ENCODE measurements at regions of chr11 and their contacts with region 1.

Region 1: DNA sequence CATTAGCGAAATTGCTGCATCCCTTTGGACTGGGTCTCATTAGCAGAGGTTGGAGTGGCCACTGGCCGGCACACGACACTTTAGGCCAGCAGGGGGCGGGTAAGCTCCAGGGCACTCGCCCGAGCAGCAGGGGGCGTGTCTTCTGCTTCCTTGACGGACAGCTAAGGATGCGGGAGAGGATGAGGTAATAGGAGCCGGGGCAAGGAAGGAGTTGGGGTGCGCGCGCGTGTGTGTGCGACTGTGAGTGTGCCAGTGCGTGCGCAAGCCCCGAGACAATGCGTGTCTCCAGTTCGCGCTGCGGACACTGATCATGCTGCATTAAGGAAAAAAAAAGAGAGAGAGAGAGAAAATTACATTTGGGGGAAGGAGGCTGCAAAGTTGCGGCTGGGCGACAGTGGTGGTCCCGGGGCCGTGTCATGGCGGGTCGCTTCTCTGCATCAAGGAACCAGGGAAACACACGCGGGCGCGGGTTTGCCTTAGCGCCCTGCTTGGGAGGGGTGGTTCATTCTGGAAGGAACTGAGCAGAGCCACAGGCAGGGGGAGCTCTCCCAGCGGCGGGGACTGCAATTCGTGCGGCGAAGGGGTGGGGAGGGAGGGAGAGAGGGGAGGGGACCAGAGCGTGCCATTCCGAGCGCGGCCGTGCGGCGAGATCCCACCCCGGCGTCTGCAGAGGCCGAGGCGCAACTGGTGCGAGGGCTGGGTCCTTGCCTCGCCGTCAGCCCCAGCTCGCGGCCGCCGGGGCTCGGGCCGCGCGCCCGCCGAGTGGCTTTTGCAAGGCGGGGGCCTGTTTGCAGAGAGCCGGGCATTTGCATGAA is at the start of gene DTX4:
- DNase-seq: peak; percentile 92 to 99
- ATAC-seq: peak; percentile 63
- total RNA-seq, gene DTX4: 58.4 to 62.4 TPM

Region 2: DNA sequence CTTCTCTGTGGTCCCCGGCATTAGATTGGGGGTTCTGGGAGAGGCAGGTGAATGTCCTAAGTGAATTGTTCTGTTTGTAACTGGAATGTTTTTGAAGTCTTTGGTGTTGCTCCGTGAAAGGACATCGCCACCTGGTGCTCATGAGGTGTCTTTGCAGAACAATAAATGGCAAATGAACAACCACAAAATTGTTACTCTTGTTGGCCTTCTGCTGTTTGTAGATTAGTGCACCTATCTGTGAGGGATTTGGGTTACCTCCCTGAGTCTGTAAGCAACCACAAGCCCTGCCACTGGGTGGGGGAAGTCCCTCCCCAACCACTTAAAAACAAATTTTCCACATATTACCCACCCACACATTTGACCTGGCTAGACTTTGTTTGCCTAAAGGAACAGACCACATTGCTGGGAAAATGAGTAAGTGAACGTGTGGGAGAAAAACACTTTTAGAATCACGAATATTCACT is 36.3 kb after region 1 on chr11:
- intact Hi-C with region 1: loop called in 1 of 2 experiments (anchors 5 kb)
- DNase-seq: peak in 1 of 2 donors; percentile 40
- ATAC-seq: peak; percentile 67

Region 3: DNA sequence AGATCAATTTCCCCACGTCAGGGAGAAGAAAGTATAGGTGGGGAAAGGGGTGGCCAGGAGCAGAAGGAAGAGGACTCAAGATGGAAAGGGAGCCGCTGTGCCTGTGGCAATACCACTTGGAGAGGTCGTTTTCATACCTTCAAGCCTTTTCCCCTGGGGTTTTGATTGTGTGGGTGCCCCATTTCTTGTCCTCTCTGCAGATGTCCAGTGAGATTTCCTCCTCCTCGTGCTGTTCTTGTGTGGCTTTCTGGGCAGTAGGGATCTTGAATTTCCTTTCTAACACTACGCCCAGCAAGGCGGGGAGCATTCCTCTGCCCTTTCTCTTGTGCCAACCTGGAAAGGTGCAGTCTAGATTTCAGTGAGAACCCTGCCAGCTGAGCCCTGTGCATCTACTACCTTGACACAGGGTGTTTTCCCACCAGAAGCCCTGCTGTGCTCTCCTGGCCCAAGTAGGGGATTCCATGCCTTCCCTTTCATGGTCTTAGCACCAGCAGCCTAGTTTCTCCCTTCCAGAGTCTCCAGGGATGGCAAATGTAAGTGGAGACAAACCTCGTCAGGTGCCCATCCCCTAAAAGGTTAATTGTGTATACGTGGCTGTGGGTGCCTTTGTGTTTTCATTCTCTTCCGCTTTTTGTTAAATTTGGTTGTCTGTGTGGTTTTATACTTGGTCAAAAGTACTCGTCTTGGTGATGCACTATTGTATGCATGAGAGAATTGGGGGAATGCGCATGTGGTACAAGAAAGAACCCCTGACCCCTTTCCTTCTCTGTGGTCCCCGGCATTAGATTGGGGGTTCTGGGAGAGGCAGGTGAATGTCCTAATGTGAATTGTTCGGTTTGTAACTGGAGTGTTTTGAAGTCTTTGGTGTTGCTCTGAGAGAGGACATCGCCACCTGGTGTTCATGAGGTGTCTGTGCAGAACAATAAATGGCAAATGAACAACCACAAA is 112.4 kb after region 1 on chr11:
- intact Hi-C with region 1: loop called in 1 of 2 experiments (anchors 10 kb)
- DNase-seq: peak in 1 of 2 donors; percentile 51
- ATAC-seq: peak; percentile 73

Measured in left colon (tissue), 2 donors.